ENCODE measurements at regions of chr1 and their contacts with region 1.

Region 1: GRCh38 chr1:243850452-243851256 is 611 bp upstream of the AKT3 start:
- DNase-seq: peak; percentile 44 to 91 (median 80)

Region 2: DNA sequence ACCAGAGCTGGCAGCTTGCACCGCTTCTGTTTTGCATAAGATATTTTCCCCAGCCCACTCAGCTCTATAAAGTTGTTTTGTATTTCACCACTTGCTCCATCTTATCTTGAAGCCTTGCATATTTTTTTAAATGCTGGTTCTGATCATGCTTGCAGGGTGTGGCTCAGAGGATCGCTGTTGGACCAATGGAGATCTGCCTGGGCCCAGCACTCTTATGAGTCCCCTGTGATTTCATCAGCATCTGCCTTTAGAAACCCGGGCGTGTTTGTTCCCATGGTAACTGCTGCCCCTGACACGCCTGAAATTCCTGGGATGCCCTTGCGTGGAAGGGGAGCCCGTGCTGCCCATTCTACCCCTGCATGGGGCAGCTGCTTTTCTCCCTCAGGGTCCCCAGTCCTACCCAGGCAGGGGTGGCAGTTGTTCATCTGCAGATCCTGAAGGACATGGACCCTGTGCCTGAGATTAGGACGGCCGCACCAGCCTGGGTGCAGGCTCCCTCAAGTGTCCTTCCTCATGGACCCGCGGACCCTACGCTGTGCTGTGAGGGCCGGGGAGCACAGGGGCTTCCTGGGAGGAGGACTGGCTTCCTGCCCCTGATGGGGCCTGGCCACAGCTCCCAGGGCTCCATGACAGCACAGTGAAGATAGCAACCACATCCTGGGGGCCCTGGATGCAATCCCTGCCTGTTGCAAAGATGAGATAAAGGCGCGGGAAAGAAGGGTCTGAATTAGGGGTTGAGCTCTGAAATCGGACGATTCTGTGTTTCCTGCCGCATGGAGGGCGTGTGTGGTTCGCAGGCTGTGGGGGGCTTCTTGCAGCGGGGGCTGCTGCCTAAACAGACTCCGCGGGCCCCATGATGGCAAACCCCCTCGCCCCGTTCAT is 368.3 kb before region 1 on chr1:
- intact Hi-C with region 1: loop called (anchors 10 kb)
- DNase-seq: peak in 4 of 42 donors; percentile 26 to 64 (median 36)

Region 3: DNA sequence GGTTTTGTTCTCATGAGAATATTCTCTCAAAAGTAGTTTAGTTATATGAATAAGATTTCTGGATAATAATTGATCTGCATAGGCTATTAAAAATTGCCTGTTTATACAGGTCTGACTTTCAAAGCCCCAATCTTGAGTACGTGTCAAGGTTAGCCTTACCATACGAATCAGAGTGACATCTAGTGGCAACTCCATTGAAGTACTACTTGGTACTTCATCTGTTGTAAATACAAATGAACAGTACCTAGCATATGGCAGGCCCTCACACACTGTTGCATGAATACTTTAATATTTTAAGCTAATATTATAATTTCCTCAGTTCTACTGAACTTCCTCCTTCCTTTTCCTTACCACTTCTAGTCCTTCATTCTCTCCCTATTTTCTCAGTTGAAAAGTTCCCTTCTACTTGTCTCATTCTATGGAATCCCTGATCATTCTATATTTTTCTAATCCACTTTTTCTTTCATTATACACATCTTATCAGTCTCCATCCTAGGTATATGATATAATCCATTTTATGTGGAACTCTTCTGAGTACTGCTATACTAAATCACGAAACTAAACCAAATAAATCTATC is 101.9 kb before region 1 on chr1:
- intact Hi-C with region 1: loop called (anchors 10 kb)
- DNase-seq: peak in 11 of 42 donors; percentile 25 to 79 (median 59)

Region 4: DNA sequence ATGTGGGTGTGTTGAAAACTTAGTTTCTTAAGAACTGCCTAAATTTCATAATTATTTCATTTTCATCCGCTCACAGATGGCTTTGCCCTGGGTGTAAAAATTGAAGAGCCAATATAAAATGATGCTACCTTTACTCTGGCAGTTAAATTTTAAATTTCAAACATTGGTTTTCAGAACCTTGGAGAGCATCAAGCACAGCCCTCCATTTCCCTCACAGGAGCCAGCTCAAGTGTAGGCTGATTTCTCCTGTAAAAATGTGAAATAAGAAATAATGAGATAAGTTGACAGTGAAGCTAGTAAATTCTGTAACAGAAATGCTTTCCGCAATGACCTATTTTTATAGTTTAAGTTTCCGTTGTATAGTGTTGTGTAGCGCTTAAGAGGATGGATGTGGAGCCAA is 53.2 kb after region 1 on chr1:
- intact Hi-C with region 1: loop called (anchors 10 kb)
- DNase-seq: peak in 1 of 42 donors; percentile 22

Region 5: GRCh38 chr1:243946946-243947345 is 96.3 kb after region 1 on chr1:
- intact Hi-C with region 1: no loop called
- DNase-seq: peak in 32 of 42 donors; percentile 20 to 73 (median 44)